PC-3 (cell line): ENCODE measurements at regions of chr2 and their contacts with region 1.

Region 1: GRCh38 chr2:229714736-229715541 is 584 bp upstream of the DNER start:
- DNase-seq: peak; percentile 55
- ATAC-seq: peak; percentile 78
- H3K4me3 ChIP-seq: peak overlapping the region; percentile 66
- H3K27ac ChIP-seq: no peak overlapping the region
- H3K4me1 ChIP-seq: peaks cover 6% of the 10 kb centered on the region; the same call in 1 of the 2 replicates
- H3K27me3 ChIP-seq: peaks cover 36% of the 10 kb centered on the region
- CTCF ChIP-seq: no peak

Region 2: DNA sequence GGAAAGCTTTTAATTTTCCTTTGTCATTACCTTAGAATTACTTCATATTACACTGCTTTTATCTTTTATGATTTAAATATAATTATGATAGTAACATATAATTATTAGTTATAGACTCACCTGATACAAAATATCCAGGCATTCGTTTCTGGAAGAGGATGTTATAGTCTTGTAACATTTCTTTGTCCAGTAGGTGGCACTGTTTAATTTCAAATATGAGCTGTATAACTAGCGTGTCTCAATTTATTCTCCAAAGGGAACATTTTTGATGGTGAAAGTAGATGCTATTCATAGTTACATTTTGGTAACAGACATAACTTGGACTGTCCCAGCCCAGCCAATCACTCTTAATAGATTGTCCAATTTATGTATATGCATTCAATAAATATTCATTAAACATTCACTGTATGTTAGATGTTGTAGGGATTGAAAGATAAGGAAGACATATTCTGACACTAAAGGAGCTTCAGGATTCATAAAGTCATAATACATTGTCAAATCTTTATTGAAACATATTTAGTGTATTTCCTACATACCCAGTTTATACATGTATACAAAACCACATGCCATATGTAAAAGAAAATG is 1824.4 kb before region 1 on chr2:
- CTCF ChIA-PET with region 1: no interaction called
- POLR2A ChIA-PET with region 1: no interaction called
- intact Hi-C with region 1: loop called (anchors 10 kb)
- DNase-seq: peak; percentile 80
- ATAC-seq: peak; percentile 80
- H3K4me3 ChIP-seq: no peak overlapping the region
- H3K27ac ChIP-seq: no peak overlapping the region
- H3K4me1 ChIP-seq: peaks cover 6% of the 10 kb centered on the region; the same call in 1 of the 2 replicates
- H3K27me3 ChIP-seq: no peaks in the 10 kb centered on the region
- CTCF ChIP-seq: peak; percentile 66

Region 3: GRCh38 chr2:229133155-229133772 is 581.7 kb before region 1 on chr2:
- CTCF ChIA-PET with region 1: no interaction called
- POLR2A ChIA-PET with region 1: no interaction called
- intact Hi-C with region 1: loop called (anchors 2 kb)
- DNase-seq: peak; percentile 78
- ATAC-seq: peak; percentile 75
- H3K4me3 ChIP-seq: no peak overlapping the region
- H3K27ac ChIP-seq: no peak overlapping the region
- H3K4me1 ChIP-seq: no peaks in the 10 kb centered on the region
- H3K27me3 ChIP-seq: peaks cover 6% of the 10 kb centered on the region; the same call in 1 of the 2 replicates
- CTCF ChIP-seq: peak; percentile 84

Region 4: GRCh38 chr2:229342376-229342775 is 372.6 kb before region 1 on chr2:
- CTCF ChIA-PET with region 1: no interaction called
- POLR2A ChIA-PET with region 1: no interaction called
- intact Hi-C with region 1: loop called (anchors 10 kb)
- DNase-seq: peak; percentile 65
- ATAC-seq: peak; percentile 53; the same call in 1 of the 2 replicates
- H3K4me3 ChIP-seq: no peak overlapping the region
- H3K27ac ChIP-seq: no peak overlapping the region
- H3K4me1 ChIP-seq: peaks cover 30% of the 10 kb centered on the region
- H3K27me3 ChIP-seq: no peaks in the 10 kb centered on the region
- CTCF ChIP-seq: peak; percentile 82

Region 5: GRCh38 chr2:229431327-229431954 is 283.5 kb before region 1 on chr2:
- CTCF ChIA-PET with region 1: interaction called, 4 read pairs
- POLR2A ChIA-PET with region 1: no interaction called
- intact Hi-C with region 1: loop called (anchors 1 kb)
- DNase-seq: peak; percentile 78
- ATAC-seq: peak; percentile 40; the same call in 1 of the 2 replicates
- H3K4me3 ChIP-seq: no peak overlapping the region
- H3K27ac ChIP-seq: no peak overlapping the region
- H3K4me1 ChIP-seq: peaks cover 7% of the 10 kb centered on the region; the same call in 1 of the 2 replicates
- H3K27me3 ChIP-seq: no peaks in the 10 kb centered on the region
- CTCF ChIP-seq: peak; percentile 67

Region 6: GRCh38 chr2:229642371-229642770 is 72.6 kb before region 1 on chr2:
- CTCF ChIA-PET with region 1: no interaction called
- POLR2A ChIA-PET with region 1: no interaction called
- intact Hi-C with region 1: loop called (anchors 5 kb)
- DNase-seq: peak; percentile 71
- ATAC-seq: peak; percentile 96
- H3K4me3 ChIP-seq: no peak overlapping the region
- H3K27ac ChIP-seq: peak overlapping the region; percentile 54
- H3K4me1 ChIP-seq: peaks cover 12% of the 10 kb centered on the region
- H3K27me3 ChIP-seq: no peaks in the 10 kb centered on the region
- CTCF ChIP-seq: no peak

Region 7: DNA sequence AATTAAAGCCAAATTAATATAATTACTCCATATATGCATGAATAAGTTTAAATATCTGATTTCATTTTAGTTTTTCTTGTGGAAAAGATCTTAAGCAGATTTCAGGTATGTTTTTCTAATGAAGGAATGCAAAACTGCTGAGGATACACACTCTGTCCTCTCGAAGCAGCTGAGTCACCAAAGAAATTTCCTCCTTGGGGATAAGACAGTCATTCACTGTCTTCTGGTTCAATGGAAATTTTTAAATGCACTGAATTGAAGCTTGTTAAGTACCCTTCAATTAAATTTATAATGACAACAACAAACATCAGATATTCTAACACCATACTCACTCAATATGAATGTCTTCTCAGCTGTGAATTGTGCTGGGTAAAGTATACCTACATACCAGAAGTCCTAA is 100.9 kb after region 1 on chr2:
- CTCF ChIA-PET with region 1: no interaction called
- POLR2A ChIA-PET with region 1: no interaction called
- intact Hi-C with region 1: no loop called
- DNase-seq: peak; percentile 51
- ATAC-seq: peak; percentile 84
- H3K4me3 ChIP-seq: no peak overlapping the region
- H3K27ac ChIP-seq: peak overlapping the region; percentile 64
- H3K4me1 ChIP-seq: peaks cover 30% of the 10 kb centered on the region
- H3K27me3 ChIP-seq: no peaks in the 10 kb centered on the region
- CTCF ChIP-seq: no peak